ENCODE measurements at regions of chr11 and their contacts with region 1.

Region 1: GRCh38 chr11:95923728-95924413 is at the start of gene MTMR2:
- DNase-seq: peak in 1 of 2 donors; percentile 88
- H3K4me3 ChIP-seq: peak within 1 kb of the TSS; percentile 86
- H3K27ac ChIP-seq: peak within 1 kb of the TSS; percentile 94 to 98
- H3K4me1 ChIP-seq: peaks cover 0 to 11% of the 10 kb centered on the region in 2 donors
- H3K27me3 ChIP-seq: no peaks in the 10 kb centered on the region
- CTCF ChIP-seq: no peak
- total RNA-seq, gene MTMR2: 14.7 TPM

Region 2: GRCh38 chr11:95849087-95849825 is 74.6 kb before region 1 on chr11:
- intact Hi-C with region 1: loop called (anchors 5 kb)
- DNase-seq: peak in 1 of 2 donors; percentile 69
- H3K4me3 ChIP-seq: no peak overlapping the region
- H3K27ac ChIP-seq: peak overlapping the region in 1 of 2 donors; percentile 33
- H3K4me1 ChIP-seq: peaks cover 0 to 4% of the 10 kb centered on the region in 2 donors
- H3K27me3 ChIP-seq: no peaks in the 10 kb centered on the region
- CTCF ChIP-seq: peak; percentile 39 to 66 (median 55)

Region 3: GRCh38 chr11:96242971-96243647 is 319.2 kb after region 1 on chr11:
- intact Hi-C with region 1: loop called (anchors 10 kb)
- DNase-seq: peak; percentile 88 to 97
- H3K4me3 ChIP-seq: peak overlapping the region; percentile 59 to 61
- H3K27ac ChIP-seq: peak overlapping the region; percentile 87 to 90
- H3K4me1 ChIP-seq: peaks cover 0 to 23% of the 10 kb centered on the region in 2 donors
- H3K27me3 ChIP-seq: no peaks in the 10 kb centered on the region
- CTCF ChIP-seq: no peak

Measured in ascending aorta (tissue), 2 donors.